ENCODE measurements at regions of chr1 and their contacts with region 1.

Region 1: GRCh38 chr1:21334214-21335087 is 44.2 kb upstream of the ECE1 start:
- DNase-seq: peak; percentile 68 to 78
- ATAC-seq: peak; percentile 31 to 69 (median 53)
- H3K4me3 ChIP-seq: peak overlapping the region in 9 of 10 donors; percentile 4 to 41 (median 36)
- H3K27ac ChIP-seq: peak overlapping the region; percentile 47 to 90 (median 84)
- H3K4me1 ChIP-seq: peaks cover 42 to 97% (median 78%) of the 10 kb centered on the region in 9 donors
- H3K27me3 ChIP-seq: no peaks in the 10 kb centered on the region
- CTCF ChIP-seq: peak; percentile 60 to 90 (median 85)

Region 2: GRCh38 chr1:21244986-21245687 is 89.3 kb before region 1 on chr1:
- intact Hi-C with region 1: no loop called
- DNase-seq: no peak
- ATAC-seq: no peak
- H3K4me3 ChIP-seq: no peak overlapping the region
- H3K27ac ChIP-seq: no peak overlapping the region
- H3K4me1 ChIP-seq: no peaks in the 10 kb centered on the region
- H3K27me3 ChIP-seq: no peaks in the 10 kb centered on the region
- CTCF ChIP-seq: peak in 7 of 9 donors; percentile 13 to 46 (median 25)

Region 3: DNA sequence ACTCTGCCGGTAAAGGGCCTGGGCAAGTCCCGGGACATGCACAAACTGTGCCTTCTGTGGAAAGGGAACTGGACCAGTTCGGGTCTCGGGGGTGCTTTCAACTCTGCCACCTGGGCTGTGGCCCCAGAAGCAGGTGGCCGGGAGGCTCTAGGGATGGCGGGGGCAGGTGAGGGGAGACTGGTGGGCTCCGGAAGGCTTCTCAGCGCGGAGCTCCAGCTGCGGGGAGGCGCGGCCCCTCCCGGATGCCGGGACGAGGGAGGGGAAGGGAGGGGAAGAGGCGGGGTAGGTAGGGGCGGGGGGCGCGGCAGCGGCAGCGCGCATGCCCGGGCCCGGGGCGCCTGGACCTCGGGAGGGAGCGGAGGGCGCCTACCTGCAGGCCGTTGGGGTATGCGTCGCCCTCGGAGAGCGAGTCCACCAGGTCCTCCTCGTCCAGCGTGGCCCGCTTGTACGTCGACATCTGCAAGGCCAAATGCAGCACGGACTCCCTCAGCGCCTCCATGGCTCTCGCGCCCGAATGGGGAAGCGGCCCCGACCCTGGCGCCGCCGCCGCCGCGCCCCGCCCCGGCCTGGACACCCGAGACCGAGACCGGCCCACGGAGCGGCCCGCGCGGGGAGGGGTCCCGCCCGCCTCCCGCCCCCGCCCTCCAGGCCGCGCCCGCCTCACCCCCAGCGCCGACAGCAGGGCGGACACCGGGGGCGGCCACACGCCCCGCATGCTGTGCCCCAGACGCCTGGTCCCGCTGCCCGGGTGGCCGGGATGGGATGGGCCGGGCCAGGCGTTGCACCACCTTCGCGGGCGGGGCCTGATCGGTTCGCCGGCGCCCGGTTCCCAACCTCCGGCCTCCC is 44.5 kb before region 1 on chr1 and contains the start of gene ECE1:
- intact Hi-C with region 1: loop called in 2 of 10 experiments (anchors 5 kb)
- DNase-seq: peak; percentile 52 to 56
- ATAC-seq: peak; percentile 55 to 71 (median 60)
- H3K4me3 ChIP-seq: peak within 1 kb of the TSS; percentile 38 to 92 (median 75)
- H3K27ac ChIP-seq: peak within 1 kb of the TSS; percentile 66 to 94 (median 90)
- H3K4me1 ChIP-seq: peaks cover 7 to 76% (median 50%) of the 10 kb centered on the region in 9 donors
- H3K27me3 ChIP-seq: no peaks in the 10 kb centered on the region
- CTCF ChIP-seq: no peak
- total RNA-seq, gene ECE1: 30.6 to 81.8 (median 53.1) TPM

Measured in heart right ventricle (tissue), 16 donors.